ENCODE measurements at regions of chr1 and their contacts with region 1.

Region 1: GRCh38 chr1:191002768-191003167 is 525.1 kb upstream of the BRINP3 start:
- DNase-seq: no peak
- H3K4me3 ChIP-seq: no peak overlapping the region
- H3K27ac ChIP-seq: no peak overlapping the region
- H3K4me1 ChIP-seq: no peaks in the 10 kb centered on the region
- H3K27me3 ChIP-seq: no peaks in the 10 kb centered on the region
- CTCF ChIP-seq: no peak
- EP300 ChIP-seq: no peak
- POLR2A ChIP-seq: no peak

Region 2: DNA sequence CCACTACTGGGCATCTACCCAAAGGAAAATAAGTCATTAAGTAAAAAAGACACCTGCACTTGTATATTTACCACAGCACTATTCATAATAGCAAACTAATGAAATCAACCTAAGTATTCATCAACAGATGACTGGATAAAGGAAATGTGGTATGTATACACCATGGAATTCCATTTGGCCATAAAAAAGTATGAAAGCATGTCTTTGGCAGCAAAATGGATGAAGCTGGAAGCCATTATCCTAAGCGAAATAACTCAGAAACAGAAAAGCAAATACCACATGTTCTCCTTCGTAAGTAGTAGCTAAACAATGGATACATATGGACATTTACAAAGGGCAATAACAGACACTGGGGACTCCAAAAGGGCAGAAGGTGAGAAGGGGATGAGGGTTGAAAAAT is 39.4 kb before region 1 on chr1:
- in situ Hi-C with region 1: no loop called
- intact Hi-C with region 1: loop called (anchors 2 kb)
- DNase-seq: no peak
- H3K4me3 ChIP-seq: no peak overlapping the region
- H3K27ac ChIP-seq: no peak overlapping the region
- H3K4me1 ChIP-seq: no peaks in the 10 kb centered on the region
- H3K27me3 ChIP-seq: no peaks in the 10 kb centered on the region
- CTCF ChIP-seq: no peak
- EP300 ChIP-seq: no peak
- POLR2A ChIP-seq: no peak

Measured in transverse colon (tissue), 4 donors.